ENCODE measurements at regions of chr2 and their contacts with region 1.

Region 1: GRCh38 chr2:96272004-96272403 is 6.0 kb downstream of the CIAO1 start:
- DNase-seq: no peak
- ATAC-seq: no peak
- H3K4me3 ChIP-seq: no peak overlapping the region
- H3K4me3 Mint-ChIP-seq: no peak overlapping the region
- H3K27ac ChIP-seq: no peak overlapping the region
- H3K27ac Mint-ChIP-seq: no peak overlapping the region
- H3K4me1 ChIP-seq: peaks cover 2 to 19% of the 10 kb centered on the region in 2 experiments
- H3K4me1 Mint-ChIP-seq: peaks cover 9 to 17% (median 13%) of the 10 kb centered on the region in 3 donors
- H3K27me3 ChIP-seq: no peaks in the 10 kb centered on the region
- H3K27me3 Mint-ChIP-seq: no peaks in the 10 kb centered on the region

Region 2: GRCh38 chr2:96344011-96344410 is 72.0 kb after region 1 on chr2:
- CTCF ChIA-PET with region 1: no interaction called
- POLR2A ChIA-PET with region 1: interaction called in 1 of 2 experiments, 12 read pairs
- DNase-seq: peak in 30 of 35 experiments; percentile 20 to 75 (median 48)
- ATAC-seq: peak; percentile 84 to 92 (median 88)
- H3K4me3 ChIP-seq: no peak overlapping the region
- H3K4me3 Mint-ChIP-seq: peak overlapping the region in 1 of 3 donors; percentile 24
- H3K27ac ChIP-seq: peak overlapping the region; percentile 85
- H3K27ac Mint-ChIP-seq: peak overlapping the region; percentile 85 to 93
- H3K4me1 ChIP-seq: peaks cover 0 to 34% of the 10 kb centered on the region in 2 experiments
- H3K4me1 Mint-ChIP-seq: peaks cover 7 to 57% (median 50%) of the 10 kb centered on the region in 3 donors
- H3K27me3 ChIP-seq: no peaks in the 10 kb centered on the region
- H3K27me3 Mint-ChIP-seq: no peaks in the 10 kb centered on the region

Measured in T-cell (primary cell).